ENCODE measurements at regions of chr1 and their contacts with region 1.

Region 1: GRCh38 chr1:165431079-165431478 is 13.8 kb downstream of the RXRG start:
- DNase-seq: no peak
- ATAC-seq: no peak
- H3K4me3 ChIP-seq: no peak overlapping the region
- H3K27ac ChIP-seq: no peak overlapping the region
- H3K4me1 ChIP-seq: no peaks in the 10 kb centered on the region
- H3K27me3 ChIP-seq: no peaks in the 10 kb centered on the region
- CTCF ChIP-seq: no peak

Region 2: DNA sequence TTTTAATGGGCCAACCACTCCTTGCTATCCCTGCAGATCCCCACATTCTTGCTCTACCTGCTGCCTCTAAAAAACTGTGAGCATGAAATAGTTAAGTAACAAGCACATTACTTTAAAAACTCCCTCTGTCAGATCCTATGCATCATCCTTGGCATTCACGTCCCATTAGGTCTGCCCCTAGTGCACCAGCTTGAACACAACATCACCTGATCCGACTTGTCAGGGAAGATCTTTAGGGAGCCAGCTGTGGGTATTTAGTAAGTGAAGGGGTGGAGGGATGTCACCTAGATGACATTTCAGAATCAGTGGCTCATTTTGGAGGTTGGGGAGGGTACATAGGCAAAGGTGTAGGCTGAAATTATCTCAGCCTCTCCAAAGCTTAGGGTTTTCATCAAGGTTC is 19.7 kb before region 1 on chr1:
- CTCF ChIA-PET with region 1: no interaction called
- POLR2A ChIA-PET with region 1: no interaction called
- in situ Hi-C with region 1: no loop called
- intact Hi-C with region 1: no loop called
- DNase-seq: no peak
- ATAC-seq: no peak
- H3K4me3 ChIP-seq: no peak overlapping the region
- H3K27ac ChIP-seq: no peak overlapping the region
- H3K4me1 ChIP-seq: no peaks in the 10 kb centered on the region
- H3K27me3 ChIP-seq: peaks cover 3% of the 10 kb centered on the region; the same call in 1 of the 2 replicates
- CTCF ChIP-seq: no peak

Region 3: DNA sequence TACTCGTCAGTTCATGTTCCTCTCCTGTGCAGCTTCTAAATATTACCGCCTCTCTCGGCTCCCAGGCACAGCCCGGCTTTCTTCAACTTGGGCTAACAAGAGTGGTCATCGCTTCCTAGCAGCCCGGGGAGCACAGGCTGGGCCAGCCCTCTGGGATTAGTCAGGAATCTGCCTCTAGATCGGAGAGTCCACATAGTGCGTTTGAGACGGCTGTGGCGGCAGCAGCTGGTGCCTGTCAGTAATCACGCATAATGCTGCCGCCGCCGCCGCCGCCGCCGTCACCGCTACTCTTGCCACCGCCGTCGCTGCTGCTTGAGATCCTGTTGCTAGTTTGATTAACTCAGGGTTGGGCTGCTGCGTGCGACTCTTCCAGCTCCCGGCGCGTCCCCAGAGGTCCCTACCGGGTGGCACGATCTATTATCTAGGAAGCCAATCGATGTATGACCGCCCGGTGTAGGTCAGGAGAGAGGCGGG is 13.9 kb after region 1 on chr1 and contains the start of gene RXRG:
- CTCF ChIA-PET with region 1: no interaction called
- POLR2A ChIA-PET with region 1: no interaction called
- in situ Hi-C with region 1: no loop called
- intact Hi-C with region 1: loop called (anchors 1 kb)
- DNase-seq: no peak
- ATAC-seq: peak; percentile 82
- H3K4me3 ChIP-seq: peak within 1 kb of the TSS; percentile 11 to 32; a peak in 3 of 4 replicates
- H3K27ac ChIP-seq: no peak within 1 kb of the TSS
- H3K4me1 ChIP-seq: peaks cover 4% of the 10 kb centered on the region
- H3K27me3 ChIP-seq: peaks cover 34% of the 10 kb centered on the region
- CTCF ChIP-seq: no peak
- total RNA-seq, gene RXRG: not detected